Activated CD4-positive, alpha-beta T cell treated with anti-CD3 and anti-CD28 coated beads, Interleukin-2, amount 10 ng/mL, durations not matched to agents 24 days and 14 days (primary cell): ENCODE measurements at regions of chr14 and their contacts with region 1.

Region 1: GRCh38 chr14:91060351-91061055 is at the start of gene RPS6KA5:
- DNase-seq: peak; percentile 100
- H3K4me3 Mint-ChIP-seq: peak within 1 kb of the TSS; percentile 85
- H3K27ac Mint-ChIP-seq: peak within 1 kb of the TSS; percentile 76
- H3K4me1 Mint-ChIP-seq: peaks cover 51% of the 10 kb centered on the region
- H3K27me3 Mint-ChIP-seq: no peaks in the 10 kb centered on the region
- total RNA-seq, gene RPS6KA5: 13.5 and 13.8 TPM in 2 replicates

Region 2: DNA sequence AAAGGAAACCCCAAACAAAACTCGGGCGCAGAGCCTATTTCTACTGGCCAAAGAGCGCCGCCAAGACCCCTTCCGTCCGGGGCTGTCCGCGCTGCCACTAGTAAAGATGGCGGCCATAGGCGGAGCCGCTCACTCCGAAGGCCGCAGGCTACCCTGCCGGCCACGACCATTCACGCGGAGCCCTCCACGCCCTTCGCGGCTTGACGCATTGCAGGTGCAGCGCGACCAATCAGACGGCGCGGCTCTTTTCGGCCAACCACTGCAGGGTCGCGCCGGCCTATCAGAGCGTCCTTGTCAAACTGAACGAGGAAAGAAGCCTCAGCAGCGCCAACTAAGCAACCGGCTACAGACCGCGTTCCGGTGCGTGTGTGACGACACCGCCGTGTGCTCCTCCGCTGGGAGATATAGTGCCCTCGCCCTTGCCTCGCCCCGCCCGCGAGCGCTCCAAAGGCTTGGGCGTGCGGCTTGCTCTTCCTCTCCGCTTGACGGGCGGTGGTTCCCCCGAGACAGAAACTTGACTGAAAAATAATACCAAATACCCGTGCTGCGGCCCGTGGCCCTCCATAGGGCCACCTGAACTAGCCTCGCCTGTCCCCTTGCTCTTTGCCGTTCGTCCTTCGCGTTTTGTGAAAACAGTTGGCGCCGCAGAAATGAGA is 677.3 kb before region 1 on chr14:
- intact Hi-C with region 1: loop called (anchors 2 kb)
- DNase-seq: peak; percentile 99
- H3K4me3 Mint-ChIP-seq: no peak overlapping the region
- H3K27ac Mint-ChIP-seq: no peak overlapping the region
- H3K4me1 Mint-ChIP-seq: peaks cover 6% of the 10 kb centered on the region
- H3K27me3 Mint-ChIP-seq: no peaks in the 10 kb centered on the region

Region 3: GRCh38 chr14:90815822-90816700 is 244.4 kb before region 1 on chr14 and contains the start of gene TTC7B:
- intact Hi-C with region 1: no loop called
- DNase-seq: peak; percentile 78
- H3K4me3 Mint-ChIP-seq: peak within 1 kb of the TSS; percentile 72
- H3K27ac Mint-ChIP-seq: peak within 1 kb of the TSS; percentile 15
- H3K4me1 Mint-ChIP-seq: peaks cover 13% of the 10 kb centered on the region
- H3K27me3 Mint-ChIP-seq: peaks cover 34% of the 10 kb centered on the region
- total RNA-seq, gene TTC7B: 2.4 and 5.4 TPM in 2 replicates

Region 4: DNA sequence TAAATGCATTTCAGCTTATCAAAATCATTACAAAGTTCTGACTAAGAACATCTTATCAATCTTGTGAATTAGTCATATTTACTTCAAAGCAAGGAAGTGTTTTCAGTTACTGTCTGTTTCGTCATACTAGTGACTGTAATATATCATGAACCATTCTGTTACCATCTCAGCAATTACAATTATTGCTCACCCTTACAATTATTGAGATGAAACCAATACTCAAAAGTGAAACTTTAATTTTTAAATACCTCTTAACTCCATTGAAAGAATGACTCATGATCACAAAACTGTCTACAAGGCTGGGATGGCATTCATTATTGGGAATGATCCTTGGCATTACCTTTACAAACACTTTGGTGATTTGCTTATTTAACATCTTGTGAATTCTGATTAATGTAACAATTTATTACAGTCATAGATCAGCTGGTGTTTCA is 90.3 kb before region 1 on chr14:
- intact Hi-C with region 1: loop called (anchors 1 kb)
- DNase-seq: no peak
- H3K4me3 Mint-ChIP-seq: peak overlapping the region; percentile 74
- H3K27ac Mint-ChIP-seq: peak overlapping the region; percentile 90
- H3K4me1 Mint-ChIP-seq: peaks cover 38% of the 10 kb centered on the region
- H3K27me3 Mint-ChIP-seq: no peaks in the 10 kb centered on the region

Region 5: GRCh38 chr14:91038438-91038837 is 22.1 kb before region 1 on chr14:
- intact Hi-C with region 1: loop called (anchors 2 kb)
- DNase-seq: no peak
- H3K4me3 Mint-ChIP-seq: no peak overlapping the region
- H3K27ac Mint-ChIP-seq: peak overlapping the region; percentile 8
- H3K4me1 Mint-ChIP-seq: peaks cover 60% of the 10 kb centered on the region
- H3K27me3 Mint-ChIP-seq: no peaks in the 10 kb centered on the region

Region 6: DNA sequence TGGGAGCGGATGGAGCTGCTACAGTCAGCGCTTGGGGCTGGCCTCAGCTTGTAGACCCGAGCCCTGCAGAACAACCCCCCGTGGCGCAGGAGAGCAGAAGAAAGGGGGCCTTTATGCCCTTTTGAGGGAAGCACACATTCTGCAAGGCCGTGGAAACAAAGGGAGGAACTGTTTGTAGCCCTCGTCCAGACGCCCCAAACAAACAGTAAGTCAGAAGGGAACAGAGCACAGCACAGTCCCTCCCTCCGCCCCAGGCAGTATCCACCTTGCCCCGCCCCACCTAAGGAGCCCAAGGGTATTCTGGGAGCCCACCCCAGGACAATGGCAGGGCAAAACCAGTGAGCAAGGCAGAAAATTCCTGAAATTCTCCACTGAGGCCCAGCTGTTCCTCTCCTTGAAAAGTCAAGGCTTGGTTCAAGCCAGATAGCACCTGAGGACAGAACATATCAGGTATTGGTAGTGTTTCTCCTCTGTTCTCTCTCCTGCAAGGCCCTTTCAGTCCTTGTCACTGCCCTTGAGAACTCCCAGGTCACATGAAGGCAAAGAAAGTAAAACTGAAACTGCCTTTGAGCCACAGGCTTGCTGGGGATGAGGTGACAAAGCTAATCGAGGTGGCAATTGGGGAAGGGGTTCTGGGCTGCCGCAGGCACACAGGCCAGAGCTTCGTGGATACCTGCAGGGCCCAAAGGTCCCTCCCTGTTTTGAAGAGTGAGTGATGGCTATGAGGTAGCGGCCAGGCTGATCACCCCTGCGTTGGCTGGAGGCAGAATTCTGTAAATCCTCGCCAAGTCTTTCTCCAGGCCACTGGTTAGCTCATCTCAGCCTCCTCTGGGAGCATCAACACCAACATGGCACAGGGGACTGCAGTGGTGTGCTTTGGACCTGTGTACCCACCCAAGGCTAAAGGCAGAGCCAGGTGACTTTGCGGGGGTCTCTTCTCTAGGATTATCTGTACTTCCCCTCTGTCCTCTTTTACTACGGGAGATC is 53.9 kb after region 1 on chr14:
- intact Hi-C with region 1: loop called (anchors 1 kb)
- DNase-seq: peak; percentile 93
- H3K4me3 Mint-ChIP-seq: peak overlapping the region; percentile 93
- H3K27ac Mint-ChIP-seq: peak overlapping the region; percentile 97
- H3K4me1 Mint-ChIP-seq: peaks cover 61% of the 10 kb centered on the region
- H3K27me3 Mint-ChIP-seq: no peaks in the 10 kb centered on the region

Region 7: DNA sequence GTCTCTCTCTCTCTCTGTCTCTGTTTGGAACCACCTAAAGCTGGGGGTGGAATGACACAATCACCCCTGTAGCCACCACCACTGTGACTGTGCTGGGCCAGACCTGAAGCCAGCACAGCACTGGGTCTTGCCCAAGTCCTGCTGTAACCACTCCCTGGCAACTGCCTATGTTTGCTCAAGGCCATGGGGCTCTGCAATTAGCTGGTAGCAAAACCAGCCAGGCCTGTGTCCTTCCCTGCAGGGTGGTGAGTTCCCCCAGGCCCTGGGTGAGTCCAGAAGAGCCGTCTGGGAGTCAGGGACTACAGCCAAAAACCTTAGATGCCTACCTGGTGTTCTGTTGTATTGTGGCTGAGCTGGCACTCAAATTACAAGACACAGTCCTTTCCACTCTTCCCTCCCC is 104.2 kb after region 1 on chr14:
- intact Hi-C with region 1: no loop called
- DNase-seq: no peak
- H3K4me3 Mint-ChIP-seq: no peak overlapping the region
- H3K27ac Mint-ChIP-seq: no peak overlapping the region
- H3K4me1 Mint-ChIP-seq: no peaks in the 10 kb centered on the region
- H3K27me3 Mint-ChIP-seq: no peaks in the 10 kb centered on the region

Region 8: GRCh38 chr14:91177073-91178034 is 116.9 kb after region 1 on chr14:
- intact Hi-C with region 1: loop called (anchors 2 kb)
- DNase-seq: peak; percentile 91
- H3K4me3 Mint-ChIP-seq: no peak overlapping the region
- H3K27ac Mint-ChIP-seq: peak overlapping the region; percentile 93
- H3K4me1 Mint-ChIP-seq: peaks cover 17% of the 10 kb centered on the region
- H3K27me3 Mint-ChIP-seq: no peaks in the 10 kb centered on the region

Region 9: DNA sequence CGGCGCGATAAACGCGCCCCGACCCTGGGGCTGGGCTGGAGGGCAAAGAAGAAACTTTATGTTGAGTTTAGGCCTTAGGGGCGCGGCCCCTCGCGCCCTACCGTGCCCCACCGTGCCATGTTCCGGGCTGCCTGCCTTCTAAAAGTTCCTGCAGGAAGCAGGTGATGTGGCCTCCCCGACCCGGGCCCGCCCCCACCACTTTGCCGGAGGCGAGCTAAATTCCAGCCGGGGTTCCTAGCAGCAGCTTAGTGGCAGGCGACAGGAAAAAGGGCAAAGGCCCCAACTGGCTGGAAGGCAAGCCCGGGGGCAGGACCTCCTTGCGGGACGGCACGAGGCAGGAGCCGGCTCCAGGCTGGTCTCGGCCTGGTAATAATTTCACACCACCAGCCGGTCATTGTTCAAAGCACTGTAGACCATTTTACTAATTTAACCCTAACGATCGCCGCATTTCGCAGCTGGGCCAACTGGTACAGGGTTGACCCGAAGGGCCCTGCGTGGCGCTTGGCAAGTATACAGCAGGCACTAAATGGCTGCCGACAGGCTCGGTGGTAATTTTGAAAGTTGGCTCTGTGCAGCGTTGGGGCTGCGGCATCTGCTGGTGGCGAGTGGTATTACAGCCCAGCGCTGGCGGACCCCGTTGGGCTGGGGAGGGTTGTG is 358.0 kb after region 1 on chr14:
- intact Hi-C with region 1: loop called (anchors 5 kb)
- DNase-seq: peak; percentile 95
- H3K4me3 Mint-ChIP-seq: peak overlapping the region; percentile 76
- H3K27ac Mint-ChIP-seq: peak overlapping the region; percentile 88
- H3K4me1 Mint-ChIP-seq: peaks cover 36% of the 10 kb centered on the region
- H3K27me3 Mint-ChIP-seq: peaks cover 2% of the 10 kb centered on the region